CD4-positive, alpha-beta T cell (primary cell): ENCODE measurements at regions of chr11 and their contacts with region 1.

Region 1: GRCh38 chr11:61332797-61333549 is at the starts of genes DDB1 and TKFC:
- DNase-seq: peak; percentile 92 to 98 (median 97)
- ATAC-seq: peak; percentile 90
- H3K4me3 ChIP-seq: peak within 1 kb of the TSS; percentile 91
- H3K4me3 Mint-ChIP-seq: peak within 1 kb of the TSS; percentile 96
- H3K27ac ChIP-seq: peak within 1 kb of the TSS; percentile 85 to 87
- H3K27ac Mint-ChIP-seq: peak within 1 kb of the TSS; percentile 95
- H3K4me1 ChIP-seq: peaks cover 54% of the 10 kb centered on the region
- H3K4me1 Mint-ChIP-seq: peaks cover 69% of the 10 kb centered on the region
- H3K27me3 ChIP-seq: no peaks in the 10 kb centered on the region
- H3K27me3 Mint-ChIP-seq: no peaks in the 10 kb centered on the region
- CTCF ChIP-seq: no peak
- total RNA-seq, gene DDB1: 140 to 147 TPM
- total RNA-seq, gene TKFC: 21.8 to 26.3 TPM

Region 2: DNA sequence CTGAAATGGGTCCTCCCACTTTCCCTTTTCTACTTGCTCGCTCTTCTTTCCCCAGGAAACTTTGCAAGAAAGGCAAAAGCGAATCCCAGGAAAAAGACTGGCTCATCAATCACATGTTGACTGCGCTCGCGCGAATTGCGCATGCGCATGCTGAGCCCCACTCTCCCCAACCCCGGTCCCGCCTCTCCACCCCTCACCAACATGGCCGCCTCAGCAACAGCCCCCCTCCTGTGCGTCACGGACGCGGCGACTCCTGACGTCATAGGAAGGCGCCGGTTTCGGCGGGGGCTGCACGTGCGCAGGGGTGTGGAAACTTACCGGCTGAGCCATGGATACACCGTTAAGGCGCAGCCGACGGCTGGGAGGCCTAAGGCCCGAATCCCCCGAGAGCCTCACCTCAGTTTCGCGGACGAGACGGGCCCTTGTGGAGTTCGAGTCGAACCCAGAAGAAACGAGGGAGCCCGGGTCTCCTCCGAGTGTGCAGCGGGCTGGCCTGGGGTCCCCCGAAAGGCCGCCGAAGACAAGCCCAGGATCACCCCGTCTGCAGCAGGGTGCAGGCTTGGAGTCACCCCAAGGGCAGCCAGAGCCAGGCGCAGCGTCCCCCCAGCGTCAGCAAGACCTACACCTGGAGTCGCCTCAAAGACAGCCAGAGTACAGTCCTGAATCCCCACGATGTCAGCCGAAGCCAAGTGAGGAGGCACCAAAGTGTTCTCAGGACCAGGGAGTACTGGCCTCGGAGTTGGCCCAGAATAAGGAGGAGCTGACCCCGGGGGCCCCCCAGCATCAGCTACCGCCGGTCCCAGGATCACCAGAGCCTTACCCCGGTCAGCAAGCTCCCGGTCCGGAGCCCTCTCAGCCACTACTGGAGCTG is 490.9 kb before region 1 on chr11 and contains the start of gene CCDC86:
- CTCF ChIA-PET with region 1: no interaction called
- POLR2A ChIA-PET with region 1: no interaction called
- intact Hi-C with region 1: loop called in 1 of 2 experiments (anchors 5 kb)
- DNase-seq: peak; percentile 96 to 100 (median 98)
- ATAC-seq: peak; percentile 96
- H3K4me3 ChIP-seq: peak within 1 kb of the TSS; percentile 99
- H3K4me3 Mint-ChIP-seq: peak within 1 kb of the TSS; percentile 78
- H3K27ac ChIP-seq: peak within 1 kb of the TSS; percentile 61 to 72
- H3K27ac Mint-ChIP-seq: peak within 1 kb of the TSS; percentile 81
- H3K4me1 ChIP-seq: peaks cover 48% of the 10 kb centered on the region
- H3K4me1 Mint-ChIP-seq: peaks cover 42% of the 10 kb centered on the region
- H3K27me3 ChIP-seq: no peaks in the 10 kb centered on the region
- H3K27me3 Mint-ChIP-seq: no peaks in the 10 kb centered on the region
- CTCF ChIP-seq: no peak
- total RNA-seq, gene CCDC86: 8.0 to 9.0 TPM

Region 3: GRCh38 chr11:61361686-61362541 is 28.9 kb after region 1 on chr11 and contains the starts of genes CYB561A3 and TMEM138:
- CTCF ChIA-PET with region 1: interaction called, 47 read pairs
- POLR2A ChIA-PET with region 1: interaction called, 64 read pairs
- intact Hi-C with region 1: loop called (anchors 1 to 2 kb)
- DNase-seq: peak; percentile 75 to 94 (median 82)
- ATAC-seq: peak; percentile 84
- H3K4me3 ChIP-seq: peak within 1 kb of the TSS; percentile 99
- H3K4me3 Mint-ChIP-seq: peak within 1 kb of the TSS; percentile 99
- H3K27ac ChIP-seq: peak within 1 kb of the TSS; percentile 95 to 100
- H3K27ac Mint-ChIP-seq: peak within 1 kb of the TSS; percentile 100
- H3K4me1 ChIP-seq: peaks cover 35% of the 10 kb centered on the region
- H3K4me1 Mint-ChIP-seq: peaks cover 36% of the 10 kb centered on the region
- H3K27me3 ChIP-seq: no peaks in the 10 kb centered on the region
- H3K27me3 Mint-ChIP-seq: no peaks in the 10 kb centered on the region
- CTCF ChIP-seq: no peak
- total RNA-seq, gene CYB561A3: 24.4 to 25.8 TPM
- total RNA-seq, gene TMEM138: 59.2 to 60.9 TPM

Region 4: DNA sequence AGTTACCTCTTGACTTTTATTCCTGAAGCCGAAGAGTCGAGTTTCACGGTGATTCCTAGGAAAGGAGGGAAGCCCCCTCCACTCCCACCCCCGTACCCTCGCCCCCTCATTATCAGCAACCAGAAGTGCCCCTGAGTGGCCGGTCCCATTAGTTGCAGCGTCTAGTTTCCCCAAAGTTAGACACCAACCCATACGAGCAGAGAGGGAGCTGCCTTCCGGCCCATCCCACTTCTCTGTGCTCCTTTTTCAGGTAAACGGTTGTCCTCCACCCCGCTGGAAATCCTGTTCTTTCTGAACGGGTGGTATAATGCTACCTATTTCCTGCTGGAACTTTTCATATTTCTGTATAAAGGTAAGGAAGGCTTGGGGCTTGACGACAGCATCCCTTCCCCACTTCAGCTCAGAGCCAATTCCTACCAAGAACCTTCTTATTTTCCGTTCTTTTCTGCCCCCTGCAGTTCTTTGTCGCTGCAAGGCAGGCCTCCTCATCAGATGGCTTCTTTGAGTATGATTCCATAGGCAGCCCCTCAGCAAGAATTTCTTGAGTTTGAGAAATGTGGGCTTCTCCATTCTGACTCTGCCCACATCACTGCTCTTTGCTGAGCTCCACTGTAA is 60.1 kb after region 1 on chr11:
- CTCF ChIA-PET with region 1: interaction called, 173 read pairs
- POLR2A ChIA-PET with region 1: interaction called, 38 read pairs
- intact Hi-C with region 1: loop called in 1 of 2 experiments (anchors 2 kb)
- DNase-seq: peak in 9 of 14 experiments; percentile 3 to 65 (median 14)
- ATAC-seq: peak; percentile 59
- H3K4me3 ChIP-seq: peak overlapping the region; percentile 76
- H3K4me3 Mint-ChIP-seq: peak overlapping the region; percentile 98
- H3K27ac ChIP-seq: peak overlapping the region; percentile 79 to 89
- H3K27ac Mint-ChIP-seq: peak overlapping the region; percentile 99
- H3K4me1 ChIP-seq: peaks cover 28% of the 10 kb centered on the region
- H3K4me1 Mint-ChIP-seq: peaks cover 23% of the 10 kb centered on the region
- H3K27me3 ChIP-seq: no peaks in the 10 kb centered on the region
- H3K27me3 Mint-ChIP-seq: no peaks in the 10 kb centered on the region
- CTCF ChIP-seq: peak; percentile 51

Region 5: DNA sequence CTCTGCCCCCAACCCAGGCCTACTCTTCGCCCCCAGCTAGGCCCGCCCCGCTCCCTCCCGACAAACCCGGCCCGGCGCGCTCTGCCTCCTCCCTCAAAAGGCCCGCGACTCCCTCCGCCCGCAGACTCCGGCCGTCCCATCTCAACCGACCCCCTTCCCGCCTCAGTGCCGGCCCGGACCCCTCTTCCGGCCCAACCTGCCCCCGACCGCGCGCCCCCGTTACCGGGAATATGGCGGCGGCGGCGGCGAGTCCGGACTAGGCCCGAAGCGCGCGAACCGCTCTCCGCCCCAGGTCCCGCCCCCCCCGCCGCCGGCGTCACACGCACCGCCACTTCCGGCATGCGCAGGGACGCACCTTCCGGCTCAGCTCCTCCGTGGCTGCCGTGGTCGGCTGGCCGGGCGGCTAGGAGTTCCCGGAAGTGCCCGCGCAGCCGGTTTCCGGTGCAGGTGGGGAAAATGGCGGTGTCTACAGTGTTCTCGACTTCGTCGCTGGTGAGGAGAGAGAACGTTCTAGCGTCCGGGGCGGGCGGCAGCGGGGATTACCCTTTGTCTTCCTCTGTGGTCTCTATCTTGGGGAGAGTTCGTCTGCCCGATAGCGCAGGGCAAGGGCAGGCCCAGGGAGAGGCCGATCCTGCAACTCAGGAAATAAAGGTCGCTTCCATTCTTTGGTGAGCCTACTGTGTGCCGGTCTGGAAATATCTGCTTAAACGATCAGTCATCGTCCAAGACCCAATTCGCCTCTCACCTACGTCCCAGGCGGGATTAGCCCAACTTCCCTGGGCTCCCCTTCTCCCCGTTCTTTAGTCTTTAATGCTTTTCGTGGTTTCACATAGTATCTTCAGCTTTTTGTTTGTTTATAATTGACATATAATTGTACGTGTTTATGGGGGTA is 97.0 kb after region 1 on chr11 and contains the starts of genes CPSF7 and SDHAF2:
- CTCF ChIA-PET with region 1: interaction called, 19 read pairs
- POLR2A ChIA-PET with region 1: interaction called, 37 read pairs
- intact Hi-C with region 1: loop called (anchors 1 kb)
- DNase-seq: peak; percentile 94 to 99 (median 97)
- ATAC-seq: peak; percentile 81
- H3K4me3 ChIP-seq: peak within 1 kb of the TSS; percentile 93
- H3K4me3 Mint-ChIP-seq: peak within 1 kb of the TSS; percentile 92
- H3K27ac ChIP-seq: peak within 1 kb of the TSS; percentile 99
- H3K27ac Mint-ChIP-seq: peak within 1 kb of the TSS; percentile 99
- H3K4me1 ChIP-seq: peaks cover 41% of the 10 kb centered on the region
- H3K4me1 Mint-ChIP-seq: peaks cover 81% of the 10 kb centered on the region
- H3K27me3 ChIP-seq: no peaks in the 10 kb centered on the region
- H3K27me3 Mint-ChIP-seq: no peaks in the 10 kb centered on the region
- CTCF ChIP-seq: no peak
- total RNA-seq, gene CPSF7: 111 to 116 TPM
- total RNA-seq, gene SDHAF2: 28.7 to 33.0 TPM

Region 6: DNA sequence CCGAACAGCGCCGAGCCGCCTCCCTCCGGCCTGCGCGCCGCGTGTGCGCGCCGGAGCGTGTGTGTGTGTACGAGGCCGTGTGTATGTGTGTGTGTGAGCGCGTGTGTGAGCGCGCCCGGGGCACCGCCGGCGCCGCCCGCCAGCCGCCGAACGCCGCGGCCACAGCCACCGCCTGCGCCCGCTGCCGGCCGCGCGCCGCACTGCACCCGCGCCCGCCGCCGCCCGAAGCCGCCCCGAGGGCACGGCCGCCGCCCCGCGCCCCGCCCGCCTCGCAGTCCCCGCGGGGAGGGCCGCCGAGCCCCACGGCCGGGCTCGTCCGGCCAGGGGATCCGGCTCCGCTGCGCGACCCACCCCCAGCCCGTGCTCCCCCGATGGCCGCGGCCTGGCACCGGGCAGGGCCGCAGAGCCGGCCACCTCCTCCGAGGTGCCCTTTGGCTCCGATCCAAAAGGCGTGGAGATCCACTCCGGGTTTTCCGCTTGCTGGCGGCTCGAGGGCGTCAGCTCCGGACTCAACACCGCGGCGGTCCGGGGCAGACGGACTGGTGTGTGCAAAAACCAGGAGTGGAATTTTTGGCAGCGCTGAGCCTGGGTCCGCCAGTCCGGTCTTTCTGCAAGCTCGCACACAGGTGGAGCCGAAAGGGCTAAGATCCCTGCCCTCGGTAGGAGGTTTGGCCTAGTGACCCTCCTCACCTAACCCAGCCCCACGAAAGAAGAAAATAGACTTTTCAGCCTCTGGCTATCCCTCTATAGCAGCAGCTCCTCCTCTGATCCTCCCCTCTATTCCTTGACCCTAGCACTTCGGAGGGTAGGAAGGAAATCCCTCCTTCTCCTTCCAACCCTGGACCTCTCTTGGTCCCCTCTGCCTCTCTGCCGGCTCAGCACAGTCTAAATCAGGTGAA is 248.3 kb after region 1 on chr11 and contains the start of gene SYT7:
- CTCF ChIA-PET with region 1: no interaction called
- POLR2A ChIA-PET with region 1: no interaction called
- intact Hi-C with region 1: loop called in 1 of 2 experiments (anchors 5 kb)
- DNase-seq: peak; percentile 86 to 96 (median 94)
- ATAC-seq: peak; percentile 86
- H3K4me3 ChIP-seq: peak within 1 kb of the TSS; percentile 28
- H3K4me3 Mint-ChIP-seq: peak within 1 kb of the TSS; percentile 97
- H3K27ac ChIP-seq: no peak within 1 kb of the TSS
- H3K27ac Mint-ChIP-seq: peak within 1 kb of the TSS; percentile 78
- H3K4me1 ChIP-seq: peaks cover 19% of the 10 kb centered on the region
- H3K4me1 Mint-ChIP-seq: peaks cover 9% of the 10 kb centered on the region
- H3K27me3 ChIP-seq: peaks cover 23 to 27% of the 10 kb centered on the region in 2 experiments
- H3K27me3 Mint-ChIP-seq: peaks cover 57% of the 10 kb centered on the region
- CTCF ChIP-seq: no peak
- total RNA-seq, gene SYT7: not detected